T-cell (primary cell): ENCODE measurements at regions of chr14 and their contacts with region 1.

Region 1: GRCh38 chr14:50830044-50830931 is 674 bp downstream of the NIN start:
- DNase-seq: peak; percentile 29 to 84 (median 62)
- ATAC-seq: peak; percentile 62 to 69 (median 66)
- H3K4me3 ChIP-seq: peak overlapping the region; percentile 64 to 87
- H3K4me3 Mint-ChIP-seq: peak overlapping the region; percentile 90 to 96 (median 95)
- H3K27ac ChIP-seq: peak overlapping the region; percentile 70
- H3K27ac Mint-ChIP-seq: peak overlapping the region; percentile 93 to 95
- H3K4me1 ChIP-seq: peaks cover 38 to 39% of the 10 kb centered on the region in 2 experiments
- H3K4me1 Mint-ChIP-seq: peaks cover 69 to 76% (median 73%) of the 10 kb centered on the region in 3 donors
- H3K27me3 ChIP-seq: no peaks in the 10 kb centered on the region
- H3K27me3 Mint-ChIP-seq: no peaks in the 10 kb centered on the region

Region 2: GRCh38 chr14:50191499-50191898 is 638.8 kb before region 1 on chr14:
- CTCF ChIA-PET with region 1: no interaction called
- POLR2A ChIA-PET with region 1: interaction called in 1 of 2 experiments, 10 read pairs
- DNase-seq: no peak
- ATAC-seq: no peak
- H3K4me3 ChIP-seq: no peak overlapping the region
- H3K4me3 Mint-ChIP-seq: no peak overlapping the region
- H3K27ac ChIP-seq: no peak overlapping the region
- H3K27ac Mint-ChIP-seq: no peak overlapping the region
- H3K4me1 ChIP-seq: no peaks in the 10 kb centered on the region
- H3K4me1 Mint-ChIP-seq: peaks cover 0 to 5% (median 0%) of the 10 kb centered on the region in 3 donors
- H3K27me3 ChIP-seq: no peaks in the 10 kb centered on the region
- H3K27me3 Mint-ChIP-seq: no peaks in the 10 kb centered on the region

Region 3: DNA sequence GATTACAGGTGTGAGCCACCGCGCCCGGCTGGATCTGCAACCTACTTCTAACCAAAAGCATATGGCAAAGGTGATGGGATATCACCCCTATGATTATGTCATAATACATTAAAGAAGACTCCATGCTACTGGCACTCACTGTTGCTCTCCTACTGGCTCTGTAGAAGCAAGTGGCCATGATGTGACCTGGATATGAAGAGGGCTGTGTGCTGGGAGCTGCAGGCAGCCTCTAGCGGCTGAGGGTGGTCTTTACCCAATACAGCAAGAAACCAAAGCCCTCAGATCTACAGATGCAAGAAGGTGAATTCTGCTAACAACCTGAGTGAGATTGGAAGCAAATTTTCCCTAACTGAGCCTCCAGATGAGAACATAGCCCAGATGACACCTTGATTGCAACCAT is 298.8 kb after region 1 on chr14:
- CTCF ChIA-PET with region 1: no interaction called
- POLR2A ChIA-PET with region 1: no interaction called
- DNase-seq: no peak
- ATAC-seq: no peak
- H3K4me3 ChIP-seq: no peak overlapping the region
- H3K4me3 Mint-ChIP-seq: no peak overlapping the region
- H3K27ac ChIP-seq: no peak overlapping the region
- H3K27ac Mint-ChIP-seq: no peak overlapping the region
- H3K4me1 ChIP-seq: no peaks in the 10 kb centered on the region
- H3K4me1 Mint-ChIP-seq: no peaks in the 10 kb centered on the region
- H3K27me3 ChIP-seq: peaks cover 0 to 12% of the 10 kb centered on the region in 2 experiments
- H3K27me3 Mint-ChIP-seq: peaks cover 28 to 30% of the 10 kb centered on the region in 2 donors